ENCODE measurements at regions of chr12 and their contacts with region 1.

Region 1: GRCh38 chr12:10385166-10385613 is 4.7 kb downstream of the KLRK1 start:
- DNase-seq: no peak
- ATAC-seq: no peak
- H3K4me3 ChIP-seq: no peak overlapping the region
- H3K27ac ChIP-seq: no peak overlapping the region
- H3K4me1 ChIP-seq: no peaks in the 10 kb centered on the region
- H3K27me3 ChIP-seq: no peaks in the 10 kb centered on the region
- CTCF ChIP-seq: no peak
- EP300 ChIP-seq: no peak
- POLR2A ChIP-seq: no peak
- RAD21 ChIP-seq: no peak

Region 2: DNA sequence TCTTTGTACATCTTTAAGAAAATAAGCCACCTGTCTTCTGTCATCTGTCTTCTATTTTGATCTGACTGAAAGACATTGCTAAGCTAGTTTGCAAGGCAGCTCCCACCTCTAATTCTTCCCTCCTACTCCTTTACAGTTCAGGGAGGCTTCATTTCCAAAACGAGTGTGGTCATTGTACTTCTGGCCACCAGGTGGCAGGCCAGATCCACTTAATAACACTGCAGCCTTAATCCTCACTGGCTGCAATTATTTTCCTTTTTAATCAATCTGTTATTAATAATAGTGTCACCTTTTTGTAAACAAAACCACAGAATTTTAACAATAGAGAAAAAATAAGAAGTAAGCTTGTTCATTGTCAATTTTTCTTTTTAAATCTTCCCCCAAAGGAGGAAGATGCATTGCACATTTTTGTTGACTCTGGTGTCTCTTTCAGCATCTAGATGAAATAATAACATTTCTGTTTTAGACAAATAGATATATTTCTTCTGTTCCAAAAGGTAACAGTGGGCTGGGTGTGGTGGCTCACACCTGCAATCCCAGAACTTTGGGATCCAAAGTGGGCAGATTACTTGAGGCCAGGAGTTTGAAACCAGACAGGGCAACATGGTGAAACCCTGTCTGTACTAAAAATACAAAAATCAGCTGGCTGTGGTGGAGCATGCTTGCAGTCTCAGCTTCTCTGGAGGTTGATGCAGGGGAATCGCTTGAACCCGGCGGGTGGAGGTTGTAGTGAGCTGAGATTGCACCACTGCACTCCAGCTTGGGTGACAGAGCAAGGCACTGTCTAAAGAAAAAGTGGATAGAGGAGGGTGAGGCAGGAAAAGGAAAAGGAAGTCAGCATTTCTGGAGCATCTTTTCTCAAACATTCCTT is 149.2 kb before region 1 on chr12:
- CTCF ChIA-PET with region 1: no interaction called
- POLR2A ChIA-PET with region 1: no interaction called
- RAD21 ChIA-PET with region 1: no interaction called
- SMC1A ChIA-PET with region 1: no interaction called
- in situ Hi-C with region 1: no loop called
- intact Hi-C with region 1: no loop called
- DNase-seq: no peak
- ATAC-seq: peak; percentile 73
- H3K4me3 ChIP-seq: no peak overlapping the region
- H3K27ac ChIP-seq: no peak overlapping the region
- H3K4me1 ChIP-seq: 0 out of 2 replicates have a peak, but pooled peaks cover 4% of the 10 kb centered on the region
- H3K27me3 ChIP-seq: no peaks in the 10 kb centered on the region; a peak in 1 of 4 replicates
- CTCF ChIP-seq: peak; percentile 66 to 80 (median 70)
- EP300 ChIP-seq: no peak
- POLR2A ChIP-seq: no peak
- RAD21 ChIP-seq: peak; percentile 94

Region 3: DNA sequence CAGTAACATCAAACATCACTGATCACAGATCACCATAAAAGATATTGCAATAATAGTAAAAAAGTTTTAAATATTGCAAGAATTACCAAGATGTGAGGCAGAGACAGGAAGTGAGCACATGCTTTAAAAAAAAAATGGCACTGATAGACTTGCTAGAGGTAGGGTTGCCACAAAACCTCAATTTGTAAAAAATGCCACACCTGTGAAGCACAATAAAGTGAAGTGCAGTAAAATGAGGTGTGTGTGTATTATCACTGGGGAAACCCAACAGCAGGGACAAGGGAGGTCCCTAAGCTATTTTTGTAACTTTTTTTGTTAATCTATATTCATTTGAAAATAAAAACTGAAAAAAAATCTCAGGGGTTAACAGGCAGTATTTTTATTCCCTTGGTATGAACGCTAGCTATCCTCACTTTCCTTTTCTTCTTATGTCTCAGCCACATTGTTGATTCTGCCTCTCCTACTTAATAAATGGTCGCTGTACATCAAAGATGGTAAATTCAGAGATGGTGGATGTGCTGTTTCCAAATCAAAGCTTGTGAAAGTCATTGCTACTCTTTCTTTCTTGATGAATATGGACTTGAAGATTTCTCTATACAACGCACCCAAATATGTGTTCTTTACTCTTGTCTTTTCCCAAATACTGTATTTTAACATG is 91.5 kb before region 1 on chr12:
- CTCF ChIA-PET with region 1: no interaction called
- POLR2A ChIA-PET with region 1: no interaction called
- RAD21 ChIA-PET with region 1: no interaction called
- SMC1A ChIA-PET with region 1: no interaction called
- in situ Hi-C with region 1: no loop called
- intact Hi-C with region 1: no loop called
- DNase-seq: no peak
- ATAC-seq: peak; percentile 51
- H3K4me3 ChIP-seq: no peak overlapping the region
- H3K27ac ChIP-seq: peak overlapping the region; percentile 33; the same call in 1 of the 2 replicates
- H3K4me1 ChIP-seq: no peaks in the 10 kb centered on the region; the same call in 1 of the 2 replicates
- H3K27me3 ChIP-seq: no peaks in the 10 kb centered on the region
- CTCF ChIP-seq: no peak
- EP300 ChIP-seq: no peak
- POLR2A ChIP-seq: no peak
- RAD21 ChIP-seq: no peak

Region 4: DNA sequence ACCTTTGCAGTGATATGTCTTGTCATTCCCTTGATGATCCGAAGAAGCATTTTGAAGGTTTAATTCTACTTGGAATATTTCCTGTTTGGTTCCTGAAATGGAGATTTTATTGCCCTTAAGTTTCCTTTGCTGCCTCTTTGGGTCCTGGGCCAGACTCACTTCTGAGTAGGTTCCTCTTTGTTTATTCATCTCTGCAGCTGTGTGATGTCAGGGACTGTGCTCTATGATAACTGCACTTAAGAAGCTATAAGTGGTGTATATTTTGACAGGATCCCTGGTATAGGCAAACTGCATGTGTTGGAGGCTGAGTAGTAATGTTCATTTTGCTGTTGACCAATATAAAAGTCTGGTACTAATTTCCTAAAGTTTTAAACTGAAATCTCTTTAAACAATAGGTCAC is 24.2 kb after region 1 on chr12 and contains the start of gene KLRC4:
- CTCF ChIA-PET with region 1: interaction called, 6 read pairs
- POLR2A ChIA-PET with region 1: interaction called, 11 read pairs
- RAD21 ChIA-PET with region 1: no interaction called
- SMC1A ChIA-PET with region 1: interaction called, 6 read pairs
- in situ Hi-C with region 1: no loop called
- intact Hi-C with region 1: no loop called
- DNase-seq: no peak
- ATAC-seq: peak; percentile 51
- H3K4me3 ChIP-seq: no peak within 1 kb of the TSS
- H3K27ac ChIP-seq: no peak within 1 kb of the TSS
- H3K4me1 ChIP-seq: no peaks in the 10 kb centered on the region; the same call in 1 of the 2 replicates
- H3K27me3 ChIP-seq: no peaks in the 10 kb centered on the region
- CTCF ChIP-seq: no peak
- EP300 ChIP-seq: no peak
- POLR2A ChIP-seq: no peak
- RAD21 ChIP-seq: no peak
- polyA plus RNA-seq, gene KLRC4: 0.34 TPM in 1 of 2 experiments, not detected in the other

Measured in GM12878 (cell line).